Vagina (tissue), 2 donors: ENCODE measurements at regions of chr3 and their contacts with region 1.

Region 1: GRCh38 chr3:123700791-123701722 is 116.2 kb upstream of the HACD2 start:
- DNase-seq: no peak
- H3K4me3 ChIP-seq: peak overlapping the region; percentile 50 to 58
- H3K27ac ChIP-seq: peak overlapping the region; percentile 79
- H3K4me1 ChIP-seq: peaks cover 7% of the 10 kb centered on the region
- H3K27me3 ChIP-seq: no peaks in the 10 kb centered on the region
- CTCF ChIP-seq: no peak
- POLR2A ChIP-seq: peak in 1 of 2 donors; percentile 4

Region 2: GRCh38 chr3:123745184-123745855 is 44.3 kb after region 1 on chr3:
- intact Hi-C with region 1: loop called (anchors 1 kb)
- DNase-seq: no peak
- H3K4me3 ChIP-seq: no peak overlapping the region
- H3K27ac ChIP-seq: no peak overlapping the region
- H3K4me1 ChIP-seq: peaks cover 7% of the 10 kb centered on the region
- H3K27me3 ChIP-seq: no peaks in the 10 kb centered on the region
- CTCF ChIP-seq: no peak
- POLR2A ChIP-seq: no peak